ENCODE measurements at regions of chr11 and their contacts with region 1.

Region 1: DNA sequence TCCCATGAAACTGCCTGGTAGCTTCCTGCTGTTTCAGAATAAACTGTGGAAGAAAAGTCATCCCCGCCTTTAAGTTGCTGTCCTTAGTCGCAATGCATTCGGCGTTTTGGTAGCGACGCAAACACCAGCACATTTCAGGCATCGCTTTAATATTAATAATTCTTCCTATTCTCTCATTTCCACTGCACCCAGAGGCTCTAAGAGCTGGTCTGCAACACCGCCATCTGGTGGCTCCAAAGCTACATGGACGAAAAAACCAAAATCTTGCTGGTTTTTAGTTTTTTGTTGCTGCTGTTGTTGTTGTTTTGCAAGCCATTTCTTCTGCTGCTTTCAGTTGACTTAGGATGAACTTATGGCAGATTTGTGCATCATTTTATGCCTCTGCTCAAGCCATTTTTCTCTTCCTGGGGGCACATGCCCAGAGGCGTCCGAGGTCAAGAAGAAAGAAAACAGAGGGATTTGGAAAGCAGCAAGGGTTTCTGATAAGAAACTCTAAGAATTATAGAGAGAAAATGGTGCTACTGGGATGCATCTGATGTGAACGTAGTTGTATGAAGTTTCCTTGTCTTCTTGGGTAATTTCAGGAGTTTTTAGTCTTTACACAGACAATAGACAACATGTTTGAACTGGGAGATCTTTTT is 345.4 kb upstream of the KIRREL3 start:
- DNase-seq: peak; percentile 66
- H3K4me3 ChIP-seq: peak overlapping the region in 1 of 2 experiments; percentile 18; a peak in 1 of 4 replicates
- H3K27ac ChIP-seq: no peak overlapping the region
- H3K4me1 ChIP-seq: no peaks in the 10 kb centered on the region
- H3K27me3 ChIP-seq: no peaks in the 10 kb centered on the region
- CTCF ChIP-seq: peak; percentile 77
- EP300 ChIP-seq: no peak
- RAD21 ChIP-seq: peak; percentile 69

Region 2: GRCh38 chr11:127056338-127056971 is 289.5 kb before region 1 on chr11:
- CTCF ChIA-PET with region 1: no interaction called
- POLR2A ChIA-PET with region 1: no interaction called
- DNase-seq: peak; percentile 29
- H3K4me3 ChIP-seq: no peak overlapping the region
- H3K27ac ChIP-seq: no peak overlapping the region
- H3K4me1 ChIP-seq: no peaks in the 10 kb centered on the region
- H3K27me3 ChIP-seq: no peaks in the 10 kb centered on the region; the same call in 1 of the 2 replicates
- CTCF ChIP-seq: no peak
- EP300 ChIP-seq: no peak
- RAD21 ChIP-seq: no peak

Region 3: GRCh38 chr11:127255209-127255608 is 90.7 kb before region 1 on chr11:
- CTCF ChIA-PET with region 1: no interaction called
- POLR2A ChIA-PET with region 1: no interaction called
- DNase-seq: no peak
- H3K4me3 ChIP-seq: no peak overlapping the region
- H3K27ac ChIP-seq: no peak overlapping the region
- H3K4me1 ChIP-seq: no peaks in the 10 kb centered on the region
- H3K27me3 ChIP-seq: no peaks in the 10 kb centered on the region
- CTCF ChIP-seq: no peak
- EP300 ChIP-seq: no peak
- RAD21 ChIP-seq: no peak

Region 4: GRCh38 chr11:127334466-127334865 is 11.5 kb before region 1 on chr11:
- CTCF ChIA-PET with region 1: interaction called, 19 read pairs
- POLR2A ChIA-PET with region 1: no interaction called
- DNase-seq: no peak
- H3K4me3 ChIP-seq: no peak overlapping the region
- H3K27ac ChIP-seq: no peak overlapping the region
- H3K4me1 ChIP-seq: no peaks in the 10 kb centered on the region
- H3K27me3 ChIP-seq: no peaks in the 10 kb centered on the region
- CTCF ChIP-seq: no peak
- EP300 ChIP-seq: no peak
- RAD21 ChIP-seq: no peak